Spleen (tissue), 13 donors: ENCODE measurements at regions of chr3 and their contacts with region 1.

Region 1: GRCh38 chr3:73100741-73101559 is 39.5 kb downstream of the EBLN2 start:
- DNase-seq: peak; percentile 78
- H3K4me3 ChIP-seq: no peak overlapping the region
- H3K27ac ChIP-seq: peak overlapping the region in 3 of 8 donors; percentile 17 to 33 (median 19)
- H3K4me1 ChIP-seq: peaks cover 0 to 9% (median 4%) of the 10 kb centered on the region in 6 donors
- H3K27me3 ChIP-seq: peaks cover 0 to 5% (median 0%) of the 10 kb centered on the region in 7 donors
- CTCF ChIP-seq: peak; percentile 78 to 95 (median 93)
- POLR2A ChIP-seq: no peak

Region 2: GRCh38 chr3:72353236-72354128 is 747.5 kb before region 1 on chr3:
- intact Hi-C with region 1: no loop called
- DNase-seq: peak; percentile 53
- H3K4me3 ChIP-seq: no peak overlapping the region
- H3K27ac ChIP-seq: no peak overlapping the region
- H3K4me1 ChIP-seq: peaks cover 0 to 6% (median 0%) of the 10 kb centered on the region in 6 donors
- H3K27me3 ChIP-seq: no peaks in the 10 kb centered on the region
- CTCF ChIP-seq: no peak
- POLR2A ChIP-seq: no peak

Region 3: DNA sequence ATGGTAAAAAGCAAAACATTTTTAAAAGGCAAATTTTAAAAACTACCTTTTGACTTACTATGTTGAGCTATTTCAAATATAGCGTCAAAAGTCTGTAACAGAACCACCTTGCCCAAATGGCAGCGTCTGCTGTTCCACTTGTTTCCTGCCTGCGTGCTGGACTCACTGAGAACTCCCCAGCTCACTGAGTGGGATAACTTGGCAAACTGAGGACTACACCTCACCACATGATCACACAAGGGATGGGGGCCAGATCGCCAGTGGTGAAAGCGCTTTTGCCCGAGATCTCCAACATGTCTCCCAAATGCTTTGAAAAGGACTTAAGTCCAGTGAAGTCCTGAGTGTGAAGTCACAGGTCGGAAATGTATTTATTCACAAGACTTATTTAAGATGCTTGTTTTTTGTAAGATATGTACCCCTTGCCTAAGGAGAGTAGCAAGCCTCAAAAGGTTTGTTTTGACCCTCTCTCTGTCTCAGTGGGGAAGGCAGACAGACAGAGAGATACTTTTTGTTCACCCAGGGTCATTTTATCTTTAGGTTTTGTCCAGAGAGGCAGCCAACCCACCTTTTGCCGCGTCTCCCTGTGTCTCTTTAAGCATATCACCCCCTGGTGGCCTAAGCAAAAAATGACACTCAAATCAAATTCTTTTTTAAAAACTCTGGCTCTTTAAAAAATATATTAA is 331.2 kb after region 1 on chr3:
- intact Hi-C with region 1: loop called (anchors 5 kb)
- DNase-seq: no peak
- H3K4me3 ChIP-seq: no peak overlapping the region
- H3K27ac ChIP-seq: no peak overlapping the region
- H3K4me1 ChIP-seq: peaks cover 0 to 8% (median 0%) of the 10 kb centered on the region in 6 donors
- H3K27me3 ChIP-seq: peaks cover 0 to 6% (median 0%) of the 10 kb centered on the region in 7 donors
- CTCF ChIP-seq: peak in 8 of 11 experiments; percentile 19 to 71 (median 54)
- POLR2A ChIP-seq: no peak